PC-9 (cell line): ENCODE measurements at regions of chr10 and their contacts with region 1.

Region 1: DNA sequence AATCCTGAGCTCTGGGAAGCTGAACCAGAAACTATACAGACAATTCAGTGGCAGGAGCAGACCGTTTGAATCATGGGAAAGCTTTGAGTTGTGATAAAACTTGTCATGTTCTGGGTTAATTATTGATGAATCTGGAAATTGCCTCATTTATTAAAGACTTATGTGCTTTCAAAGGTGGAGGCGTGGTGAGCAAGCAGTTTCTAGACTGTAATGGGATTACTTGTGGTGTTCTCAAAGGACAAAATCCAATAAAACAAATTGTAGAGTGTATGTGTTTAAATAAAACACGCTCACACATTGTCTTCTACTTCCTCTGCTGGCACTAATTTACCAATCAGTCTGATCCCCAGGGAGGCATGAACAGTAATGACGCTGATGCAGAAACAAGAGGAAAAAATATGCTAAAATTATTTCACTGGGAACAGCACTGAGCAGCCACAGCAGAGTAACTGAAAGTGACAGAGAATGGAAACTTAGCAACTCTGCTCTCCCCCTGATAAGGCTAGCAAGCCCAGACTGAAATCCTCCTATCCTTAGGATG is 25.1 kb downstream of the PARD3 start:
- DNase-seq: no peak
- H3K4me3 ChIP-seq: no peak overlapping the region
- H3K27ac ChIP-seq: no peak overlapping the region
- H3K4me1 ChIP-seq: no peaks in the 10 kb centered on the region
- H3K27me3 ChIP-seq: no peaks in the 10 kb centered on the region
- CTCF ChIP-seq: no peak

Region 2: GRCh38 chr10:34687434-34688210 is 102.4 kb before region 1 on chr10:
- CTCF ChIA-PET with region 1: interaction called, 12 read pairs
- POLR2A ChIA-PET with region 1: no interaction called
- intact Hi-C with region 1: no loop called
- DNase-seq: no peak
- H3K4me3 ChIP-seq: no peak overlapping the region
- H3K27ac ChIP-seq: no peak overlapping the region
- H3K4me1 ChIP-seq: no peaks in the 10 kb centered on the region
- H3K27me3 ChIP-seq: no peaks in the 10 kb centered on the region
- CTCF ChIP-seq: no peak

Region 3: GRCh38 chr10:34768261-34768971 is 21.6 kb before region 1 on chr10:
- CTCF ChIA-PET with region 1: no interaction called
- POLR2A ChIA-PET with region 1: interaction called, 15 read pairs
- intact Hi-C with region 1: no loop called
- DNase-seq: peak in 1 of 2 experiments; percentile 64
- H3K4me3 ChIP-seq: no peak overlapping the region
- H3K27ac ChIP-seq: no peak overlapping the region
- H3K4me1 ChIP-seq: no peaks in the 10 kb centered on the region
- H3K27me3 ChIP-seq: no peaks in the 10 kb centered on the region
- CTCF ChIP-seq: no peak